Mammary epithelial cell (primary cell): ENCODE measurements at regions of chr19 and their contacts with region 1.

Region 1: DNA sequence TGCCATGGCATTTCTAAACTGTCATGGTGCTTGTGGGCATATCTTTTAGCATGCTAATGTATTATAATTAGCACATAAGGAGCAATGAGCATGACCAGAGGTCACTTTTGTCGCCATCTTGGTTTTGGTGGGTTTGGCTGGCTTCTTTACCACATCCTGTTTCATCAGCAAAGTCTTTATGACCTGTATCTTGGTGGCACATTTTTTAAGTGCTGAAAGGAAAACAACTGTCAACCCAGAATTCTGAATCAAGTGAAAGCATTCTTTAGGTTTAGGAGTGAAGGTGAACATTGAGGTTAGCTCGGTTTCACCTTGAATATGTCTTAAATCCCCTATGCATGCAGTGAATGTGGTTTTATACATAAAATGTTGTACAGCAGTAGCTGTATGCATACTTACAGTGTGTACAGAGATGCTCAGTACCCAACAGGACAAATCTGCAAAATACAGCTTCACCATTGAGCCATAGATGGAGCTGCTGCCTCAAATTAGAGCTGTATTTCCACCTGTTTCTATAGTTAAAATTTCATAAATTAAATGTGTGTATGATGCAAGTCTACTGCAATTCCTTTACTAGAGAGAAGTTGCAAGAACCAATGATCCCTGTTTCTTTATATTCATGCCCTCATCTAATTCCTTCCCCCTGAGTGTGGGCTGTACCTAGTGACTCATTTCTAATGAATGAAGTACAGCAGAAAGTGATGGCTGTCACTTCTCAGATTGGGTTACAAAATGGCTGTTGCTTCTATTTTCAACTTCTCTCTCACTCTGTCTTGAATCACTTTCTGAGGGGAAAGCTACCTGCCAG is 25.2 kb upstream of the IGSF23 start:
- DNase-seq: peak; percentile 74
- H3K4me3 ChIP-seq: no peak overlapping the region
- H3K27ac ChIP-seq: peak overlapping the region; percentile 76
- H3K4me1 ChIP-seq: peaks cover 20% of the 10 kb centered on the region
- H3K27me3 ChIP-seq: no peaks in the 10 kb centered on the region
- CTCF ChIP-seq: peak; percentile 13 to 52

Region 2: GRCh38 chr19:44512326-44513298 is 75.6 kb before region 1 on chr19:
- CTCF ChIA-PET with region 1: no interaction called
- dilution Hi-C with region 1: loop called (anchors 5 kb)
- in situ Hi-C with region 1: no loop called
- intact Hi-C with region 1: loop called (anchors 1 kb)
- DNase-seq: peak; percentile 61
- H3K4me3 ChIP-seq: no peak overlapping the region
- H3K27ac ChIP-seq: no peak overlapping the region
- H3K4me1 ChIP-seq: no peaks in the 10 kb centered on the region
- H3K27me3 ChIP-seq: peaks cover 5% of the 10 kb centered on the region
- CTCF ChIP-seq: peak; percentile 69 to 89

Region 3: DNA sequence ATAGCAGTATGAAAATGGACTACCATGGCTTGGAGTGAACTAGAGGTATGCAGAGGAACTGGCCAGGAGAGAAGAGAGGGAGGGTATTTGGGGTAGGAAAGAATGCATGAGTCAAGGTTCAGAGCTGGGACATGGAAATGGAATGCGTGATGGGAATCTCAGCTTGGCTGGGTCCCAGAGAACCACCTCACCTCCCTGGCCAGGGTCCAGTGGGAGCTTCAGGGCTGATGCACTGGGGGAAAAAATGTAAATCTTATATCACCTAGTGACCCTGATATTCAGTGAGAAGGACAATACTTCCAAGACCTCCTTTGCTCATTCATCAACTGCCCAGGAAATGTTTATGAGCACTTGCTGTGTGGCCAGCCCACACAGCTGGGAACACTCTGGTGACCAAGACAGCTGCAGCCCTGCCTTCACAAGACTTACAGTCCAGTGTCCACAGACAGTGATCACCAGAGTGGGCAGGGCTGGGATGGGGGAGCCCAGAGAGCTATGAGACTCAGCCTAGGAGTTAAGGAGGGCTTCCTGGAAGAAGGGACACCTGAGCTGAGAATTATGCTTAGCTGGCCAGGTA is 38.0 kb after region 1 on chr19:
- CTCF ChIA-PET with region 1: interaction called, 3 read pairs
- dilution Hi-C with region 1: no loop called
- in situ Hi-C with region 1: no loop called
- intact Hi-C with region 1: loop called (anchors 1 kb)
- DNase-seq: peak; percentile 90
- H3K4me3 ChIP-seq: no peak overlapping the region
- H3K27ac ChIP-seq: no peak overlapping the region
- H3K4me1 ChIP-seq: peaks cover 24% of the 10 kb centered on the region
- H3K27me3 ChIP-seq: peaks cover 3% of the 10 kb centered on the region
- CTCF ChIP-seq: no peak

Region 4: GRCh38 chr19:44657211-44657921 is 69.2 kb after region 1 on chr19:
- CTCF ChIA-PET with region 1: interaction called, 3 read pairs
- dilution Hi-C with region 1: no loop called
- in situ Hi-C with region 1: no loop called
- intact Hi-C with region 1: loop called (anchors 1 kb)
- DNase-seq: no peak
- H3K4me3 ChIP-seq: no peak overlapping the region
- H3K27ac ChIP-seq: no peak overlapping the region
- H3K4me1 ChIP-seq: no peaks in the 10 kb centered on the region
- H3K27me3 ChIP-seq: no peaks in the 10 kb centered on the region
- CTCF ChIP-seq: peak; percentile 88

Region 5: DNA sequence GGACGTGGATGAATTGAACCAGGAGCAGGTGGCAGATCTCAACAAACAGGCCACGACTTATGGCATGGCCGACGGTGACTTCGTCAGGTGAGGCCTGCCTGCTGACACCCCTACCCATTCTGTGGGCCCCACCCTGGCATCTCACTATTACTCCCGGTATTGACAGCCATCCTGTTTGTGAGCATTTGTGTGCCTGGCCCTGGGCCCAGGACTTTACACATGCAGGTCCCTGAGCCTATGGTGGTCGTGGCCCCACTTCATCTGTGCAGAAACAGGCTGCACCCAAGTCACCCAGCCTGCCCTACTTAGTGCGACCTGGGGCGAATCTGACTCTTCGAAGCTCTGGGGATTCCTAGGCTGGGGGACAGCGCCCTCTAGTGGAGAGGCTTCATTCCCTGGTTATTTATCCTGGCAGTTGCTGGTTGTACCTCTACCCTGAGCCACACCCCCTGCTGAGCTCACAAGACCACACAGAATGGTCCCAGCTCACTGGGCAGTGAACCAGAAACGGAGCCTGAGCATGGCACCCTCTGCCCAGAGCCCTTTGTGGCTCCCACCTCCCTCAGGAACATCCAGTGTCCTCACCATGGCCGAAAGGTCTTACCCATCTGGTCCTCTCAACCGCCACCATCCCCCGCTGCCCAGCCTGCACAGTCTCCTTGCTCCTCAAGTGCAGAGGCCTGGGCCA is 471.3 kb after region 1 on chr19:
- CTCF ChIA-PET with region 1: no interaction called
- dilution Hi-C with region 1: no loop called
- in situ Hi-C with region 1: no loop called
- intact Hi-C with region 1: loop called (anchors 5 kb)
- DNase-seq: peak; percentile 70
- H3K4me3 ChIP-seq: no peak overlapping the region
- H3K27ac ChIP-seq: no peak overlapping the region
- H3K4me1 ChIP-seq: peaks cover 8% of the 10 kb centered on the region
- H3K27me3 ChIP-seq: no peaks in the 10 kb centered on the region
- CTCF ChIP-seq: peak; percentile 91 to 95